ENCODE measurements at regions of chr1 and their contacts with region 1.

Region 1: DNA sequence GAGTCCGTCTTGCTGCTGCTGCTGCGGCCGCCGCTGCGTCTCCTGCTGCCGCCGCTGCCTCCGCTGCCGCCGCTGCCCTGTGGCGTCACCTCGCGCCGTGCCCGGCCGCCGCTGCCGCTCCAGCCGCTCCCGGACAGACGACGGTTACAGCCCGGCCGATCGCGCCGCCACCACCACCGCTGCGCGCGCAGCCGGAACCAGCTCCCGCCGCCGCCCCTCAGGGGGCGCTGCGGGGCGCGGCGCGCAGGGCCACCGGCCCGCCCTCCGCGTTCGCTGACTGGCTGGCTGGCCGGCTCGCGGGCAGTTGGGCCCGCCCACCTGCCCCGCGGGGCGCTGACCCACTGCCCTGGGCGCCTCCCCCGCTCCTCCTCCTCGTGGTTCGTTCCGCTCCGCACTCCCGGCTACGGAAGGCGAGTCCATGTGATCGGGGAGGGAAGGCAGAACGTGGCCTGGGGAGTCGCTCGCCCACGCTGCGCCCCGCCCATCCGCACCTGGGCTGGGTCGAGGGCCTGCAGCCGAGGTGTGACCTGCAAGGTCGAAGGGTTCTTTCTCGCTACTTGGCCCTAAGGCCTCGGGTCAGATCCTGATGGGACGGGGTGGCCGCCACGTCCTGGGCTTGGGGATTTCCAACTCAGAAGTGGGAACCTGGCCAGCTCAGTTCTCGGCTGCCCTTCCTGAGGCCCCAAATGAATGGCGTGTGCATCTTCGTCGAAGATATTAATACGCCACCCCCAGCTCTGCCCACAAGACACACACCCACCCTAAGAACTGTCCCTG is at the start of gene PTP4A2:
- DNase-seq: peak; percentile 61 to 93 (median 76)
- ATAC-seq: peak; percentile 52
- H3K4me3 ChIP-seq: peak within 1 kb of the TSS; percentile 98
- H3K4me3 Mint-ChIP-seq: peak within 1 kb of the TSS; percentile 94
- H3K27ac ChIP-seq: peak within 1 kb of the TSS; percentile 84 to 86
- H3K27ac Mint-ChIP-seq: peak within 1 kb of the TSS; percentile 96
- H3K4me1 ChIP-seq: peaks cover 73% of the 10 kb centered on the region
- H3K4me1 Mint-ChIP-seq: peaks cover 62% of the 10 kb centered on the region
- H3K27me3 ChIP-seq: no peaks in the 10 kb centered on the region
- H3K27me3 Mint-ChIP-seq: no peaks in the 10 kb centered on the region
- CTCF ChIP-seq: peak; percentile 24
- total RNA-seq, gene PTP4A2: 282 to 287 TPM

Region 2: DNA sequence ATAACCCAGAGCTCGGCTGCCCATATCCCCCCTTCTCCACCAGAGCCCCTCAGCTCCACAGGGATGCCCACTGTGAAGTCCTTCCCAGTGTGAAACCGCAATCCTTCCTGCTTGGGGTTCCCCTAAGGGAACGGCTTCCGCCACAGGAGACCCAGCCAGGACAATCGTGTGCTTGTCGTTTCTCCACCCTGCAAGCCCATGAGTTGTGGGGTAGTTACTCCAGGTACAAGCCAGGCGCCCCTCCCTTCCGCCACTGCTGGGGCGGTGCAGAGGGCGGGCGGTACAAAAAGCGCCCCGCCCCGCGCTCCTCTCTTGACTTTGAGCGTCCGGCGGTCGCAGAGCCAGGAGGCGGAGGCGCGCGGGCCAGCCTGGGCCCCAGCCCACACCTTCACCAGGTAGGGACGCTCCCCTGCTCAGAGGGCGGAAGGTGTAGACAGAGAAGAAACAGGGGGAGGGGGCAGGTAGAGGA is 362.1 kb before region 1 on chr1 and contains the start of gene TINAGL1:
- CTCF ChIA-PET with region 1: no interaction called
- POLR2A ChIA-PET with region 1: no interaction called
- intact Hi-C with region 1: no loop called
- DNase-seq: no peak
- ATAC-seq: no peak
- H3K4me3 ChIP-seq: no peak within 1 kb of the TSS
- H3K4me3 Mint-ChIP-seq: no peak within 1 kb of the TSS
- H3K27ac ChIP-seq: no peak within 1 kb of the TSS
- H3K27ac Mint-ChIP-seq: no peak within 1 kb of the TSS
- H3K4me1 ChIP-seq: no peaks in the 10 kb centered on the region
- H3K4me1 Mint-ChIP-seq: no peaks in the 10 kb centered on the region
- H3K27me3 ChIP-seq: peaks cover 8 to 13% of the 10 kb centered on the region in 2 experiments
- H3K27me3 Mint-ChIP-seq: peaks cover 23% of the 10 kb centered on the region
- CTCF ChIP-seq: no peak
- total RNA-seq, gene TINAGL1: not detected

Region 3: DNA sequence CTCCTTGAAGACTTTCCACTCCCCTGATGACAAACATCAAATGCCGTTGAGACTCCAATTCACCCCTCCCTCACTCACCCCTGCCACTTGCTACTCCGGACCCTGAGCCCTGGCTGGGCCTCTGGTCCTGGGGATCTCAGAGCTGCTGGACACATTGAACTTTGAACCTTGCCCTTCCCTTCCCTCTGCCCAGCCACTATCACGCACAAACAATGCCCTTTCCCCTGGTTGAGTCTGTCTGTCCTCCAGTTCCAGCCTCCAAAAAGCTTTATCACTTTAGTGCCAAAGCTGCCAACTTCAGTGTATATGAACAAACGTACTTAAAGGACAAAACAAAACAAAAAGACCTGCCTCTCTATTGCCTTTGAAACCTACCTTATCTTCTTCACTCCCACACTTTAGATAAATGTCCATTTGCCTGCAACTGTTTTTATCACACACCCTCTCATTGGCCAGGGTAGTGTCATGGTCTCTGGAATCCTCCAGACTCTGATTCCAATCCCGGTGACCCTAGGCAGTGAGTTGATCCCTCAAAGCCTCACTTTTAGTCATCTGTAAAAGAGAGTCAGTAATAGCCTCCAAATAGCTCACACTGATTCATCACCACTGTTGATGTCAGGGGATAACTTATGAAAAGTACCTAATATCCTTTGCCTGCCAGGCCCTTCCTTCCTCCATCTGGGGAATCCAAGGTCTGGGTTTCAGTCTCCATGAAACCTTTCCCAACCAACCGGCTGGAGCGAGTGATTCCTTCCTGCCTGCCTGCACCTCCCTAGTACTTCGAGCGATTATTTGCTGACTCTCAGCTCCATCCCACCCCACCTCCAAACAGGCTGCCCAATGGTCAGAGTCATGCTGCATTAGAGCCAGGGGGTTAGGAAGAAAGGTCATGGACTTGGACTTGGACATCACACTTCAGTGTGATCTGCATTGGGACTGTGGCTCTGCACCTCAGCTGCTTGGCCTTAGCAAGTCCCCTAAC is 106.7 kb before region 1 on chr1:
- CTCF ChIA-PET with region 1: interaction called, 3 read pairs
- POLR2A ChIA-PET with region 1: interaction called, 19 read pairs
- intact Hi-C with region 1: loop called (anchors 5 kb)
- DNase-seq: no peak
- ATAC-seq: no peak
- H3K4me3 ChIP-seq: no peak overlapping the region
- H3K4me3 Mint-ChIP-seq: no peak overlapping the region
- H3K27ac ChIP-seq: no peak overlapping the region
- H3K27ac Mint-ChIP-seq: no peak overlapping the region
- H3K4me1 ChIP-seq: peaks cover 35% of the 10 kb centered on the region
- H3K4me1 Mint-ChIP-seq: peaks cover 44% of the 10 kb centered on the region
- H3K27me3 ChIP-seq: no peaks in the 10 kb centered on the region
- H3K27me3 Mint-ChIP-seq: no peaks in the 10 kb centered on the region
- CTCF ChIP-seq: no peak

Region 4: GRCh38 chr1:31897526-31898100 is 40.7 kb before region 1 on chr1:
- CTCF ChIA-PET with region 1: no interaction called
- POLR2A ChIA-PET with region 1: interaction called, 7 read pairs
- intact Hi-C with region 1: loop called in 1 of 2 experiments (anchors 5 kb)
- DNase-seq: no peak
- ATAC-seq: no peak
- H3K4me3 ChIP-seq: no peak overlapping the region
- H3K4me3 Mint-ChIP-seq: no peak overlapping the region
- H3K27ac ChIP-seq: no peak overlapping the region
- H3K27ac Mint-ChIP-seq: no peak overlapping the region
- H3K4me1 ChIP-seq: no peaks in the 10 kb centered on the region
- H3K4me1 Mint-ChIP-seq: peaks cover 22% of the 10 kb centered on the region
- H3K27me3 ChIP-seq: no peaks in the 10 kb centered on the region
- H3K27me3 Mint-ChIP-seq: no peaks in the 10 kb centered on the region
- CTCF ChIP-seq: no peak

Region 5: DNA sequence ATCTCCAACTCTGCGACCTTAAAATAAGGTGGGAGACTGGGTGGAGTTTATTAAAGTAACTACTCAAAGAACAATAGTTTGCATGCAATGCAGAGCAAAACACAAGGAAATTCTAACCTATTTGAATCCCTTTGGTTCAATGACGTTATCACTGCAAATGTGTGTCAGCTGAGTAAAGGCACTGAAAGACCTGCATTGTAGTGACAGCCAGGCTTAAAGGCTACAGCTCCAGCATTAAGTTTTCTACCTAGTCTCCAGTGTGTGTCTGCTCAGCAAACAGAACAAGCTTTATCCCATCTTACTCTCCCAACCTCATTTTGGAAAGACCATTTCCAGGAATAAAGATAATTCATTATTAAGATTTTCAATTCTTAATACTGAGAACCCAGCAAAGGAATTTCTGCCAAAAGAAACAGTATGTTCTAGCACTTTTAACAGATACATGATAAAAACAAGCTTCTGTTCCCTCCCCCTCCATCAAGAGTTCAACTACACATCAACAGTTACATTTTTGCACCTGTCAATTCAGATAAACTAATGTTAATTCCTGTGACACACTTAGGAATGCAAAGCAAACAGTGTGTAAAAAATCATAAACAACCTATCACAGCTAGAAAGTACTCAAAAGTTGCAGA is 14.3 kb before region 1 on chr1:
- CTCF ChIA-PET with region 1: interaction called, 15 read pairs
- POLR2A ChIA-PET with region 1: interaction called, 103 read pairs
- intact Hi-C with region 1: loop called in 1 of 2 experiments (anchors 1 kb)
- DNase-seq: peak in 2 of 14 experiments; percentile 38 to 56
- ATAC-seq: peak; percentile 56
- H3K4me3 ChIP-seq: no peak overlapping the region
- H3K4me3 Mint-ChIP-seq: peak overlapping the region; percentile 76
- H3K27ac ChIP-seq: no peak overlapping the region
- H3K27ac Mint-ChIP-seq: peak overlapping the region; percentile 90
- H3K4me1 ChIP-seq: peaks cover 59% of the 10 kb centered on the region
- H3K4me1 Mint-ChIP-seq: peaks cover 81% of the 10 kb centered on the region
- H3K27me3 ChIP-seq: no peaks in the 10 kb centered on the region
- H3K27me3 Mint-ChIP-seq: no peaks in the 10 kb centered on the region
- CTCF ChIP-seq: no peak

Region 6: GRCh38 chr1:32013386-32014198 is 75.2 kb after region 1 on chr1 and contains the start of gene KHDRBS1:
- CTCF ChIA-PET with region 1: interaction called, 3 read pairs
- POLR2A ChIA-PET with region 1: interaction called, 21 read pairs
- intact Hi-C with region 1: loop called (anchors 5 kb)
- DNase-seq: peak; percentile 95 to 100 (median 98)
- ATAC-seq: peak; percentile 85
- H3K4me3 ChIP-seq: peak within 1 kb of the TSS; percentile 73
- H3K4me3 Mint-ChIP-seq: peak within 1 kb of the TSS; percentile 97
- H3K27ac ChIP-seq: peak within 1 kb of the TSS; percentile 71 to 98
- H3K27ac Mint-ChIP-seq: peak within 1 kb of the TSS; percentile 90
- H3K4me1 ChIP-seq: peaks cover 36% of the 10 kb centered on the region
- H3K4me1 Mint-ChIP-seq: peaks cover 36% of the 10 kb centered on the region
- H3K27me3 ChIP-seq: no peaks in the 10 kb centered on the region
- H3K27me3 Mint-ChIP-seq: no peaks in the 10 kb centered on the region
- CTCF ChIP-seq: no peak
- total RNA-seq, gene KHDRBS1: 91.6 to 94.2 TPM

Region 7: DNA sequence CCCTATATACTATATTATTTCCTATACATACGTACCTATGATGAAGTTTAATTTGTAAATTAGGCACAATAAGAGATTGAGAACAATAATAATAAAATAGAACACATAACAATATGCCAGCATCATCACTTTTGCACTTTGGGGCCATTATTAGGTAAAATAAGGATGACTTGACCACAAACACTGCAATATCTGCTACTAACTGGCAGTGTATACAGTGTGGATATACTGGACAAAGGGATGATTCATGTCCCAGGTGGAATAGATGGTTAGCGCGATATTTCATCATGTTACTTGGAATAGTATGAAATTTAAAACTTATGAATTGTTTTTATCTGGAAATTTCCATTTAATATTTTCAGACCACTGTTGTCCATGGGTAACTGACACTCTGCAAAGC is 205.7 kb after region 1 on chr1:
- CTCF ChIA-PET with region 1: no interaction called
- POLR2A ChIA-PET with region 1: no interaction called
- intact Hi-C with region 1: no loop called
- DNase-seq: no peak
- ATAC-seq: no peak
- H3K4me3 ChIP-seq: no peak overlapping the region
- H3K4me3 Mint-ChIP-seq: no peak overlapping the region
- H3K27ac ChIP-seq: no peak overlapping the region
- H3K27ac Mint-ChIP-seq: peak overlapping the region; percentile 12
- H3K4me1 ChIP-seq: peaks cover 5% of the 10 kb centered on the region
- H3K4me1 Mint-ChIP-seq: peaks cover 58% of the 10 kb centered on the region
- H3K27me3 ChIP-seq: no peaks in the 10 kb centered on the region
- H3K27me3 Mint-ChIP-seq: no peaks in the 10 kb centered on the region
- CTCF ChIP-seq: no peak

Region 8: DNA sequence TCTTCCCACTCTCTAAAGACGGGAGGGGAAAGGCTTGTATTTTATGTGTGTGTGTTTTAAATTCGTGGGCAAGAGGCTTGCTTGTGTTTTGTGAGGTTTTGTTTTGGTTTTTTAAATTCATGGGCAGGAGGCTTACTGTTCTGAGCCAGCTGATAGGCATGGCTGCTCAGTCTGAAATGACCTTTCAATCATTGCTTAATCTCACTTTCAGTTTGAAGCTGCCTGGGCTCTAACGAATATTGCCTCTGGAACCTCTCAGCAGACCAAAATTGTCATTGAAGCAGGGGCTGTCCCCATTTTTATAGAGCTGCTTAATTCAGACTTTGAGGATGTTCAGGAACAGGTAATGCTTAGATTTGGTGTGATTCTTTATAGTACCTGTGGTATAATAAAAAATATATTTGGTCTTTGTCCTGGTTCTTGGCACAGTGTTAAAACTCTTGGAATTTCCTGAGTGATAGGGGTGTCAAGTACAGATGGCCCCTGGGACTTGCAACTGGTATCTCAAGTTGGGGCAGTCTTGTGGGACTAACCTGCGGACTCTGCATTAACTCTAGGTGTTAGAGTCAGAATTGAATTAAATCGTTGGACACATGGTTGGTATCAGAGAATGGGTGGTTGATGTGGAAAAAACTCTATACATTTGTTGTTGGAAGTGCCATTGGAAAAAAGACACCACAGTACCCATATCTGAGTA is 221.0 kb after region 1 on chr1:
- CTCF ChIA-PET with region 1: no interaction called
- POLR2A ChIA-PET with region 1: no interaction called
- intact Hi-C with region 1: no loop called
- DNase-seq: no peak
- ATAC-seq: no peak
- H3K4me3 ChIP-seq: no peak overlapping the region
- H3K4me3 Mint-ChIP-seq: no peak overlapping the region
- H3K27ac ChIP-seq: no peak overlapping the region
- H3K27ac Mint-ChIP-seq: no peak overlapping the region
- H3K4me1 ChIP-seq: no peaks in the 10 kb centered on the region
- H3K4me1 Mint-ChIP-seq: peaks cover 3% of the 10 kb centered on the region
- H3K27me3 ChIP-seq: no peaks in the 10 kb centered on the region
- H3K27me3 Mint-ChIP-seq: no peaks in the 10 kb centered on the region
- CTCF ChIP-seq: no peak

Region 9: DNA sequence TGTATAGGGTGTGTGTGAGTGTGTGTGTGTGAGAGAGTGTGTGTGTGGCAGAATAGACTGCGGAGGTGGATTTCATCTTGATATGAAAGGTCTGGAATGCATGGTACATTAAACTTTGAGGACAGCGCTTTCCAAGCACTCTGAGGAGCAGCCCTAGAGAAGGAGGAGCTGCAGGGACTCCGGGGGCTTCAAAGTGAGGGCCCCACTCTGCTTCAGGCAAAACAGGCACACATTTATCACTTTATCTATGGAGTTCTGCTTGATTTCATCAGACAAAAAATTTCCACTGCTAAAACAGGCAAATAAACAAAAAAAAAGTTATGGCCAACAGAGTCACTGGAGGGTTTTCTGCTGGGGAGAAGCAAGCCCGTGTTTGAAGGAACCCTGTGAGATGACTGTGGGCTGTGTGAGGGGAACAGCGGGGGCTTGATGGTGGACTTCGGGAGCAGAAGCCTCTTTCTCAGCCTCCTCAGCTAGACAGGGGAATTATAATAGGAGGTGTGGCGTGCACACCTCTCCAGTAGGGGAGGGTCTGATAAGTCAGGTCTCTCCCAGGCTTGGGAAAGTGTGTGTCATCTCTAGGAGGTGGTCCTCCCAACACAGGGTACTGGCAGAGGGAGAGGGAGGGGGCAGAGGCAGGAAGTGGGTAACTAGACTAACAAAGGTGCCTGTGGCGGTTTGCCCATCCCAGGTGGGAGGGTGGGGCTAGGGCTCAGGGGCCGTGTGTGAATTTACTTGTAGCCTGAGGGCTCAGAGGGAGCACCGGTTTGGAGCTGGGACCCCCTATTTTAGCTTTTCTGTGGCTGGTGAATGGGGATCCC is 335.2 kb after region 1 on chr1:
- CTCF ChIA-PET with region 1: no interaction called
- POLR2A ChIA-PET with region 1: no interaction called
- intact Hi-C with region 1: no loop called
- DNase-seq: peak; percentile 51 to 92 (median 84)
- ATAC-seq: peak; percentile 89
- H3K4me3 ChIP-seq: peak overlapping the region; percentile 44
- H3K4me3 Mint-ChIP-seq: peak overlapping the region; percentile 87
- H3K27ac ChIP-seq: peak overlapping the region; percentile 60 to 78
- H3K27ac Mint-ChIP-seq: peak overlapping the region; percentile 93
- H3K4me1 ChIP-seq: peaks cover 76% of the 10 kb centered on the region
- H3K4me1 Mint-ChIP-seq: peaks cover 56% of the 10 kb centered on the region
- H3K27me3 ChIP-seq: no peaks in the 10 kb centered on the region
- H3K27me3 Mint-ChIP-seq: no peaks in the 10 kb centered on the region
- CTCF ChIP-seq: no peak